Mammary epithelial cell (primary cell): ENCODE measurements at regions of chr11 and their contacts with region 1.

Region 1: GRCh38 chr11:65711785-65712632 is at the start of gene KAT5:
- DNase-seq: peak; percentile 97
- H3K4me3 ChIP-seq: peak within 1 kb of the TSS; percentile 56 to 80 (median 61)
- H3K27ac ChIP-seq: peak within 1 kb of the TSS; percentile 93
- H3K4me1 ChIP-seq: peaks cover 14% of the 10 kb centered on the region
- H3K27me3 ChIP-seq: no peaks in the 10 kb centered on the region
- CTCF ChIP-seq: peak; percentile 94 to 99
- total RNA-seq, gene KAT5: 26.5 to 49.9 TPM

Region 2: DNA sequence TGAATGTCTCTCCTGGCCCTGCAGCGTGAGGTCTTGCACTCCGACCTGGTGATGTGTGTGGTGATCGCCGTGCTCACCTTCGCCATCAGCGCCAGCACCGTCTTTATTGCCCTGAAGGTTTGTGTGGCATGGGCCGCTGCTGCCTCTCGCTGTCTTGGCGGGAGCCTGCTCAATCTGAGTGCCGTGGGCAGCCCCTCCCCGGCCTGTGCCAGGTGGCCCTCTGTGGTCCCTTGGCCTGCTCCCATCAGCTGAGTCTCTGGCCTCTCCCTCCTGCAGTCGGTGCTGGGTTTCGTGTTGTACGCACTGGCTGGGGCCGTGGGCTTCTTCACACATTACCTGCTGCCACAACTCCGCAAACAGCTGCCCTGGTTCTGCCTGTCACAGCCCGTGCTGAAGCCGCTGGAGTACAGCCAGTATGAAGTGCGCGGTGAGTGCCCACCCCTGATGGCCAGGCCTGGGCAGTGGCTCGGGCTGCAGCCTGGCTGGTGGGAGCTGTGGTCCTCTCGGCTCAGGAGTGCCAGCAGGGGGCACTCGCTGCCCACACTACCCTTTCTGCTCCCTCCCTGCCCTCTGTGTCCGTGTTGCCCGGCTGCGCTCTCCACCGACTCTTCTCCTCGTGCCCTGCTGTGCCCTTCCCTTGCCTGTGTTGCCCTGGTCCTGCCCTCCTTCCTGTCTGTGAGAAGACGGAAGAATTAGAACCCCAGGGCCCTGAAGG is 86.2 kb before region 1 on chr11:
- CTCF ChIA-PET with region 1: no interaction called
- dilution Hi-C with region 1: no loop called
- in situ Hi-C with region 1: no loop called
- intact Hi-C with region 1: loop called (anchors 1 kb)
- DNase-seq: no peak
- H3K4me3 ChIP-seq: no peak overlapping the region
- H3K27ac ChIP-seq: no peak overlapping the region
- H3K4me1 ChIP-seq: no peaks in the 10 kb centered on the region
- H3K27me3 ChIP-seq: no peaks in the 10 kb centered on the region
- CTCF ChIP-seq: peak; percentile 44 to 68

Region 3: GRCh38 chr11:65637794-65638317 is 74.2 kb before region 1 on chr11 and contains the start of gene SIPA1:
- CTCF ChIA-PET with region 1: no interaction called
- dilution Hi-C with region 1: no loop called
- in situ Hi-C with region 1: no loop called
- intact Hi-C with region 1: no loop called
- DNase-seq: peak; percentile 73
- H3K4me3 ChIP-seq: peak within 1 kb of the TSS; percentile 65 to 73 (median 72)
- H3K27ac ChIP-seq: peak within 1 kb of the TSS; percentile 20
- H3K4me1 ChIP-seq: peaks cover 11% of the 10 kb centered on the region
- H3K27me3 ChIP-seq: no peaks in the 10 kb centered on the region
- CTCF ChIP-seq: peak in 1 of 2 donors; percentile 36
- total RNA-seq, gene SIPA1: 13.2 to 16.1 TPM

Region 4: DNA sequence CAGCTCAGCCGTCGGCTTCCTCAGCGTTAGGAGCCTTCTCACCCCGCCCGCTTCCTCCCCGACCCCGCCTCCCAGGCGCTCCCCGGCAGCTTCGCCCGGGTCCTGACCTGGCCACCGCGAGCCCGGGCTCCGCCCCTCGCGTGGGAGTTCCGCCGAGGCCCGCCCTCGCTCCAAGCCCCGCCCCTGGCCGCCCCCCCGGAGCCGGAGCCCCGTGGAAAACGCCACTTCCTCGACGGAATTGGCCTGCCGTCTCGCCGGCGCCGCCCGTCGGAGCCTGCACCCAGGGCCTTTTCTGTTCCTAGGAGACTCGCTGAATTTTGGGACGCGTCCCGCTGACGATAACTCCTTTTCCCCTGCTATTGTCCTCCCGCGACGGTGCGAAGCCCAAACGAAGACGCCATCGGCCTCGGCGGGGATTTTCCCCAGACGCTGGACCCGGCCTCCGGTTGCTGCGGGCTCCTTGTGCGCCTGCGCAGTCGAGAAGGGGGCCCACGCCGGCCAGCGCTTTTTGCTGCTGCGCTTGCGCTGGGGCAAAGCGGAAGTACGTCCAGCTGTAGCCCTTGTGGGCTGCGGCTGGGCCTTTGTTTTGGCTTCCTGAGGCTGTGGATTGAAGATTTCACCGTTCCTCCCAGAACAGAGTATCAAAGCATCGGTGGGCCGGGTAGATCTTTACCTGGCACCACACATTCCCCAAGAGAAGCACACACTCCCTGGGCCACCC is 59.3 kb before region 1 on chr11:
- CTCF ChIA-PET with region 1: no interaction called
- dilution Hi-C with region 1: no loop called
- in situ Hi-C with region 1: no loop called
- intact Hi-C with region 1: no loop called
- DNase-seq: peak; percentile 77
- H3K4me3 ChIP-seq: peak overlapping the region; percentile 26 to 58 (median 47)
- H3K27ac ChIP-seq: peak overlapping the region; percentile 47
- H3K4me1 ChIP-seq: peaks cover 45% of the 10 kb centered on the region
- H3K27me3 ChIP-seq: no peaks in the 10 kb centered on the region
- CTCF ChIP-seq: no peak

Region 5: GRCh38 chr11:65766535-65766934 is 54.5 kb after region 1 on chr11:
- CTCF ChIA-PET with region 1: no interaction called
- dilution Hi-C with region 1: no loop called
- in situ Hi-C with region 1: loop called in 1 of 2 experiments (anchors 5 kb)
- intact Hi-C with region 1: loop called (anchors 1 kb)
- DNase-seq: peak; percentile 33
- H3K4me3 ChIP-seq: no peak overlapping the region
- H3K27ac ChIP-seq: no peak overlapping the region
- H3K4me1 ChIP-seq: no peaks in the 10 kb centered on the region
- H3K27me3 ChIP-seq: no peaks in the 10 kb centered on the region
- CTCF ChIP-seq: no peak

Region 6: GRCh38 chr11:65773784-65774411 is 61.9 kb after region 1 on chr11:
- CTCF ChIA-PET with region 1: no interaction called
- dilution Hi-C with region 1: no loop called
- in situ Hi-C with region 1: loop called in 1 of 2 experiments (anchors 5 kb)
- intact Hi-C with region 1: loop called (anchors 1 kb)
- DNase-seq: peak; percentile 38
- H3K4me3 ChIP-seq: no peak overlapping the region
- H3K27ac ChIP-seq: no peak overlapping the region
- H3K4me1 ChIP-seq: peaks cover 15% of the 10 kb centered on the region
- H3K27me3 ChIP-seq: no peaks in the 10 kb centered on the region
- CTCF ChIP-seq: peak; percentile 19 to 37

Region 7: DNA sequence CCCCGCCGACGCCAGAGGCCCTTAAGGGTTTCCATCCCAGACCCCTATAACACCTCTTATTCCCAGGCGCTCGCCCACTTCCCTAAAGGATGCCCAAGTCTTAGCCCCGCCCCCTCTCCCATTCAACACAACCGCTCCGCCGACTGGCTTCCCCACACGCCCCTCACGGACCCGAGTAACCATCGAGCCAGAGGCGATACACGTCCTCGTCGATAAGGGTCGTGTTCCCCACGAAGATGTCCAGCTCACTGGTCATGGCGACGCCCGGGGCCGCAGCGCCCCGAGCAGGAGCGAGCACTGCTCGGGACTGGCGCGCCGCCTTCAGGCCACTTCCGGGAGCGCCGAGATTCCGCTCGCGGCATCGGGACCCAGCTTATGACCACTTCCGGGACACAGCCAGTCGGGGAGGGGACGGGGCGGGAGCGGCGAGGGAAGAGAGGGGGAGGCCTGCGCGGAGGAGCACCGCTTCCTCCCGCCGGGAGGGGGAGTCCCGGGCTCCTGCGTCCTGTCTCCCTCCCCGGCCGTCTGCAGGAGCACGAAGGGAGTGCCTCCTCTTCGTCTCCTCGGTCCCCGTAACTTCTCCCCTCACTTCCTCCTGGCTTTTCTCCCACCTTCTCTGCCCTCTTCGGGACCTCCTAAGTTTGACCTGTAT is 176.3 kb after region 1 on chr11 and contains the start of gene FIBP:
- CTCF ChIA-PET with region 1: no interaction called
- dilution Hi-C with region 1: no loop called
- in situ Hi-C with region 1: no loop called
- intact Hi-C with region 1: loop called (anchors 1 kb)
- DNase-seq: peak; percentile 95
- H3K4me3 ChIP-seq: peak within 1 kb of the TSS; percentile 78 to 89 (median 80)
- H3K27ac ChIP-seq: peak within 1 kb of the TSS; percentile 70
- H3K4me1 ChIP-seq: peaks cover 56% of the 10 kb centered on the region
- H3K27me3 ChIP-seq: no peaks in the 10 kb centered on the region
- CTCF ChIP-seq: peak; percentile 30 to 80
- total RNA-seq, gene FIBP: 84.1 to 125 TPM